ENCODE measurements at regions of chr13 and their contacts with region 1.

Region 1: GRCh38 chr13:44197791-44198770 is 175.5 kb upstream of the SERP2 start:
- DNase-seq: peak; percentile 34
- H3K4me3 Mint-ChIP-seq: no peak overlapping the region
- H3K27ac Mint-ChIP-seq: no peak overlapping the region
- H3K4me1 Mint-ChIP-seq: peaks cover 32% of the 10 kb centered on the region
- H3K27me3 Mint-ChIP-seq: peaks cover 62% of the 10 kb centered on the region

Region 2: DNA sequence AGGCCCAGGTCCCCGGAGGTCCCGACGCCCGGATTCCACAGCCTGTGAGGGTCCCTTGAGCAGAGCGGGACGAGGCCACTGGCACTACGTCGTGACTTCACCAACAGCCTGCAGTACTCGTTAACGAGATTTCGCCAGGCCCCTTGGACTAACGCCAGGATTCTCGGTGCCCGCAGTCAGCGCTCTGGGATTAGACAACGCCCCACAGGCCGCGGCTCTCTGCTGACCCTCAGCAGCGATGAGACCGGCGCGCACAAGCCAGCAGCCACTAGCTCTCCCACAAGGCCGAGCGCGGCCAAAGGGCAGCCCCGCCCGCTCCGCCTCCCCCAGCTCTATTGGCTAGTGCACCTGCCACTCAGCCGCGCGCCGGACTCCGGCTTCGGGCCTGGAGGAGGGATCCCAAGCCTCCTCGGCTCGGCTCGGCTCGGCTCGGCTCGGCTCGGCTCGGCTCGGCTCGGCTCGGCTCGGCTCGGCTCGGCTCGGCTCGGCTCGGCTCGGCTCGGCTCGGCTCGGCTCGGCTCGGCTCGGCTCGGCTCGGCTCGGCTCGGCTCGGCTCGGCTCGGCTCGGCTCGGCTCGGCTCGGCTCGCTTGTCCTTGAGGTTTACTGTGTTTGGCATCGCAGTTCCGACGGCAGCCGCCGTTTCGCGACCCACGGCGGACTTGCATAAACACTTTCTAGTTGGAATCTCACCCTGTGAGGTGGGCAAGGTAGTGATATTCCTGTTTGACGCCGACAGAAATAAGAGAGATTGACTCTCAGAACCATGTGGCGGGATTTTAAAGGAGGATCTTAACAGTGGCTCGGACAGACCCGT is 56.1 kb before region 1 on chr13:
- intact Hi-C with region 1: loop called (anchors 2 kb)
- DNase-seq: peak; percentile 93
- H3K4me3 Mint-ChIP-seq: peak overlapping the region; percentile 84
- H3K27ac Mint-ChIP-seq: peak overlapping the region; percentile 67
- H3K4me1 Mint-ChIP-seq: peaks cover 24% of the 10 kb centered on the region
- H3K27me3 Mint-ChIP-seq: peaks cover 51% of the 10 kb centered on the region

Region 3: DNA sequence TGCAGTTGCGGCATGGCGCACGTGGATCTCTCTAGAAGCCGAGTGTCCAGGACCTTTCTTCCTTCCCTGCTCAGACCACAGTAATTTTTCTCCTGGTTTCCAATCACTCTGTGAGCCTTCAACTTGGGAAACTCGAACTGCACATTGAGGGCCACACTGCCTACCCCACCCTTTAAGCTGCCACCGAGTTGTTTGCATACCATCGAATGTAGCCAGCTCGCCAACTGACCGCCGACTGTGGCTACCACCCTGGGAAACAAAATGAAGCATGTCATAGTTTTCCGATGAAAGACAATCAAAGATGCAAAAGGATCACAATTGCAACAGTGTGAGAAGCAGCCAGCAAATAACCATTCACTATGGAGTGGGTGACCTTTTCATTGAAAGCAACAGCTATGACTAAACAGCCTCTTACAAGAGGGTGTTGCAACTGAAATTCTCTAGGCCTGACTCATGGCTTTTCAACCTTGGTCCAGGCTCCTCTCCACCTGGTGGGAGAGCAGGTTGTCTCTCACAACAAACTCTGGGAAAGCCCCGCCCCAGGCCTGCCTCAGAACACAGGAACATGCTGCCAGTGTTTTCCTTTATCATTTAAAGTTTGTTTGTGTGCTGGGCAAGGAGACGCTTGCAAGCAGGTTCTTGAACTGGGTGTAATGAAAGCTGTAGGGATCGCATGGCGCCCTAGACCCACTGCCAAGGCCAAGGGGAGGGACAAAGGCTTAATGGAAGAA is 33.9 kb after region 1 on chr13:
- intact Hi-C with region 1: loop called (anchors 5 kb)
- DNase-seq: no peak
- H3K4me3 Mint-ChIP-seq: no peak overlapping the region
- H3K27ac Mint-ChIP-seq: no peak overlapping the region
- H3K4me1 Mint-ChIP-seq: no peaks in the 10 kb centered on the region
- H3K27me3 Mint-ChIP-seq: peaks cover 21% of the 10 kb centered on the region

Region 4: GRCh38 chr13:44259045-44260027 is 61.3 kb after region 1 on chr13:
- intact Hi-C with region 1: loop called (anchors 1 kb)
- DNase-seq: peak; percentile 47
- H3K4me3 Mint-ChIP-seq: peak overlapping the region; percentile 70
- H3K27ac Mint-ChIP-seq: peak overlapping the region; percentile 72
- H3K4me1 Mint-ChIP-seq: peaks cover 14% of the 10 kb centered on the region
- H3K27me3 Mint-ChIP-seq: peaks cover 49% of the 10 kb centered on the region

Region 5: GRCh38 chr13:44300895-44301638 is 103.0 kb after region 1 on chr13:
- intact Hi-C with region 1: loop called (anchors 5 kb)
- DNase-seq: no peak
- H3K4me3 Mint-ChIP-seq: no peak overlapping the region
- H3K27ac Mint-ChIP-seq: no peak overlapping the region
- H3K4me1 Mint-ChIP-seq: peaks cover 17% of the 10 kb centered on the region
- H3K27me3 Mint-ChIP-seq: peaks cover 12% of the 10 kb centered on the region

Measured in activated T-helper 2 cell treated with anti-CD3 and anti-CD28 coated beads, Interferon-gamma antibody, Interleukin-2, Interleukin-4, amounts not matched to agents 10 μg/mL and 5 μg/mL and 100 μg/mL, durations not matched to agents 14 hours and 24 hours and 36 hours (primary cell).